PC-9 (cell line): ENCODE measurements at regions of chr12 and their contacts with region 1.

Region 1: DNA sequence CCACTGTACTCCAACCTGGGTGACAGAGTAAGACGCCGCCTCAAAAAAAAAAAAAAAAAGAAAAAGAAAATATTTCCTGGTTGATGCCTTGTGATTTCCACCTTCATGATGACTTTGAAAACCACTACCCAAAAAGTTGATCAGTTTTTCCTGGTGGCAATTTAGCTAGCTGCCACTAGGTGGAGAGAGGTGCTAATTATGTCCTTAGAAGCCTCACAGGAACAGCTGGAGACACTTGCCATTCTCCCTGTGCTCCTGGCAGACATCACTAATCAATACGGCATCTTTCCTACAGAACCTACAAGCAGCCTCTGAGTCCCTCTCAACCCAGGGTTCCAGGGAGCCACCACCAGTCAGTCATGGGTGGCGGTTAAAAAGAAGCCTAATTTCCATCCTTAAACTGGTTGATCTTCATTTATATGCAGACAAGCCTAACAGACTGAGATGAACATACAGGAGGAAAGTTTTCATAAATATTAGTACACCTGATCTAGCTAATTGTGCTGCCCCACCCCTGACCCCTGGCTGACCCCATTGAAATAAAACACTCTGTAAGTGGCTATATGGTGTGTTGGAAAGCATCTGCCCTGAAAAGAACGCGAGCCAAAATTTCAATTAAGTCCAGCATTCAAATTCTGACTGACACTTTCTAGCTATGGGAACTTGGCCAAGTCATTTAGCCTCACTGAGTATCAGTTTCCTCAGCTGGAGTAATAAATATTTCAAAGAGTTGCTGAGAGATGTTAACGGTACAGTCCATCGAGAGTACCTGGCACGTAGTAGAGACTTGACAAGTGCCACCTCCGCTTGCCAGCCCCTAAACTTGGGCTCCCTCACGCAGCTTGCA is 6.2 kb upstream of the OAS1 start:
- DNase-seq: peak; percentile 28 to 69
- H3K4me3 ChIP-seq: no peak overlapping the region
- H3K27ac ChIP-seq: no peak overlapping the region
- H3K4me1 ChIP-seq: peaks cover 2% of the 10 kb centered on the region; the same call in 1 of the 2 replicates
- H3K27me3 ChIP-seq: peaks cover 36% of the 10 kb centered on the region
- CTCF ChIP-seq: peak; percentile 84

Region 2: DNA sequence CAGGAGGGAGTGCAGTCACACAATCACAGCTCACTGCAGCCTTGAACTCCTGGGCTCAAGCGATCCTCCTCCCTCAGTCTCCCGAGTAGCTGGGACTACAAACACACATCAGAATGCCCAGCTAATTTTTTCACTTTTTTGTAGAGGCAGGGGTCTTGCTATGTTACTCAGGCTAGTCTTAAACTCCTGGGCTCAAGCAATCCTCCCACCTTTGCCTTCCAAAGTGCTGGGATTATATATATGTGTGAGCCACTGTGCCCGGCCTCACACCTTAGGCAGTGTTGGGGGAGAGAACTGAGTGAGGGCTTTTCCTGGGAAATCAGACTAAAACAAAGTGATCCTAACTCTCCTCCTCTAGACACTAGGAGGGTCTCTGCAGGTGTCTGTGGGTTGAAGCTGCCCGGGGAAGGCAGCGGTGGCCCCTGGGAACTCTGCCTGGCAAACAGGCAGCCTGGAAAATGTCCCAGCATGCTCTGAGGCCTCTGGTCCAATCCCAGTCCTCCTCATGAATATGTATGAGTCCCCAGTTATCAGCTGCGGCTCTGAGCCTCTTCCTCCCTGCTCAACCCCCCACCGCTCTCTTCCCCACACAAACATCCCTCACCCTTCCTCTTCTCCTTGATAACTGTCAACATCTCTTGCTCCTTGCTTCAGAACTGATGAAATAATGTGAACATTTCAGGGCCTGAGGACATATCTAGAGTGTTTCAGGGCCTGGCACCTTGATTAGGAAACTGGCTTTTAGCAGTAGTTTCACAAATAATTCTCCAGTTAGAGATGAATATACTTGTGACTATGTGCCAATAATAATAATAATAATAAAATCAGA is 784.1 kb before region 1 on chr12:
- CTCF ChIA-PET with region 1: no interaction called
- POLR2A ChIA-PET with region 1: no interaction called
- intact Hi-C with region 1: no loop called
- DNase-seq: peak; percentile 32 to 81
- H3K4me3 ChIP-seq: peak overlapping the region; percentile 1; the same call in 1 of the 2 replicates
- H3K27ac ChIP-seq: peak overlapping the region; percentile 92
- H3K4me1 ChIP-seq: peaks cover 77% of the 10 kb centered on the region
- H3K27me3 ChIP-seq: no peaks in the 10 kb centered on the region
- CTCF ChIP-seq: no peak

Region 3: GRCh38 chr12:112937741-112938719 is 37.5 kb after region 1 on chr12 and contains the start of gene OAS3:
- CTCF ChIA-PET with region 1: no interaction called
- POLR2A ChIA-PET with region 1: no interaction called
- intact Hi-C with region 1: loop called (anchors 2 kb)
- DNase-seq: peak; percentile 50 to 68
- H3K4me3 ChIP-seq: peak within 1 kb of the TSS; percentile 73
- H3K27ac ChIP-seq: peak within 1 kb of the TSS; percentile 1; the same call in 1 of the 2 replicates
- H3K4me1 ChIP-seq: peaks cover 29% of the 10 kb centered on the region
- H3K27me3 ChIP-seq: no peaks in the 10 kb centered on the region
- CTCF ChIP-seq: no peak
- total RNA-seq, gene OAS3: 16.2 and 17.4 TPM in 2 replicates

Region 4: GRCh38 chr12:112971248-112971647 is 70.7 kb after region 1 on chr12:
- CTCF ChIA-PET with region 1: no interaction called
- POLR2A ChIA-PET with region 1: no interaction called
- intact Hi-C with region 1: no loop called
- DNase-seq: no peak
- H3K4me3 ChIP-seq: no peak overlapping the region
- H3K27ac ChIP-seq: no peak overlapping the region
- H3K4me1 ChIP-seq: no peaks in the 10 kb centered on the region
- H3K27me3 ChIP-seq: 0 out of 2 replicates have a peak, but pooled peaks cover 5% of the 10 kb centered on the region
- CTCF ChIP-seq: no peak

Region 5: GRCh38 chr12:113030875-113031525 is 130.5 kb after region 1 on chr12:
- CTCF ChIA-PET with region 1: interaction called, 4 read pairs
- POLR2A ChIA-PET with region 1: no interaction called
- intact Hi-C with region 1: loop called (anchors 1 kb)
- DNase-seq: peak; percentile 21 to 52
- H3K4me3 ChIP-seq: no peak overlapping the region
- H3K27ac ChIP-seq: no peak overlapping the region
- H3K4me1 ChIP-seq: no peaks in the 10 kb centered on the region
- H3K27me3 ChIP-seq: 0 out of 2 replicates have a peak, but pooled peaks cover 3% of the 10 kb centered on the region
- CTCF ChIP-seq: peak; percentile 79